PC-3 (cell line): ENCODE measurements at regions of chr3 and their contacts with region 1.

Region 1: GRCh38 chr3:12287727-12288191 is 1.1 kb upstream of the PPARG start:
- DNase-seq: peak; percentile 63
- ATAC-seq: peak; percentile 57
- H3K4me3 ChIP-seq: peak overlapping the region; percentile 74
- H3K27ac ChIP-seq: peak overlapping the region; percentile 78
- H3K4me1 ChIP-seq: peaks cover 18% of the 10 kb centered on the region
- H3K27me3 ChIP-seq: no peaks in the 10 kb centered on the region
- CTCF ChIP-seq: no peak

Region 2: DNA sequence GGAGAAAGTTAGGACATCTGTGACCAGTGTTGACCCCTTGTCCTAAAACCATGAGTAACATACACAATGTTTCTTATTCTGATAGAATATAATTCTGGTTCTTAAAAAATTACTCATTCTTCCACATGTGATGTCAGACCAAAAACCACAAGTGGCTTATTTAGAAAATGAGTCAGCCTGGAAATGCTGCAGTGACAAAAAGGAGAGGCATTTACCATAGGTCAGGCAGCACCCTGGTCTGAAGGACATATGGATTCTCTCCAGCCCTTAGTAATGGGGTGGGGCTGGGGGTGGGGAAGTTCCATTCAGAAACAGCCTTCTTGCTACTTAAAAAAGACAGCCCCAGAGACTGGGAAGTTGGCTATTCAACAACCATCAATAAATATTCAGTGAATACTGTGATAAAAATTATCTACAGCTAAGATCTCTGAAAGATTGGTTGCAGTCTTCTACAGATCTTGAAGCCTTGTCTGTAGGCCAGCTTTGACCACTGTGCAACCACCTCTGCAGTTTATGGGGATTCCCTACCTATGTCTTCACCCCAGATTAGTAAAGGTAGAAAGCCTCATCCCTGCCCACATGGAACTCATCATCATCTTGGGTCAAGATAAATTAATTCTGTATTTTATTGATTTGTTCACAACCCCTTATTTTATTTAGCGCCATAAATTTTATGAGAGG is 94.1 kb before region 1 on chr3:
- CTCF ChIA-PET with region 1: no interaction called
- POLR2A ChIA-PET with region 1: no interaction called
- intact Hi-C with region 1: loop called (anchors 1 kb)
- DNase-seq: peak; percentile 99
- ATAC-seq: peak; percentile 82
- H3K4me3 ChIP-seq: peak overlapping the region; percentile 47
- H3K27ac ChIP-seq: peak overlapping the region; percentile 97
- H3K4me1 ChIP-seq: peaks cover 57% of the 10 kb centered on the region
- H3K27me3 ChIP-seq: no peaks in the 10 kb centered on the region
- CTCF ChIP-seq: no peak

Region 3: GRCh38 chr3:12229903-12230302 is 57.9 kb before region 1 on chr3:
- CTCF ChIA-PET with region 1: no interaction called
- POLR2A ChIA-PET with region 1: no interaction called
- intact Hi-C with region 1: loop called (anchors 2 kb)
- DNase-seq: peak; percentile 94
- ATAC-seq: peak; percentile 92
- H3K4me3 ChIP-seq: no peak overlapping the region
- H3K27ac ChIP-seq: peak overlapping the region; percentile 94
- H3K4me1 ChIP-seq: peaks cover 49% of the 10 kb centered on the region
- H3K27me3 ChIP-seq: no peaks in the 10 kb centered on the region
- CTCF ChIP-seq: no peak

Region 4: GRCh38 chr3:12308517-12308916 is 20.8 kb after region 1 on chr3:
- CTCF ChIA-PET with region 1: no interaction called
- POLR2A ChIA-PET with region 1: no interaction called
- intact Hi-C with region 1: loop called (anchors 2 kb)
- DNase-seq: peak; percentile 98
- ATAC-seq: peak; percentile 54
- H3K4me3 ChIP-seq: peak overlapping the region; percentile 17
- H3K27ac ChIP-seq: peak overlapping the region; percentile 97
- H3K4me1 ChIP-seq: peaks cover 95% of the 10 kb centered on the region
- H3K27me3 ChIP-seq: no peaks in the 10 kb centered on the region
- CTCF ChIP-seq: no peak

Region 5: DNA sequence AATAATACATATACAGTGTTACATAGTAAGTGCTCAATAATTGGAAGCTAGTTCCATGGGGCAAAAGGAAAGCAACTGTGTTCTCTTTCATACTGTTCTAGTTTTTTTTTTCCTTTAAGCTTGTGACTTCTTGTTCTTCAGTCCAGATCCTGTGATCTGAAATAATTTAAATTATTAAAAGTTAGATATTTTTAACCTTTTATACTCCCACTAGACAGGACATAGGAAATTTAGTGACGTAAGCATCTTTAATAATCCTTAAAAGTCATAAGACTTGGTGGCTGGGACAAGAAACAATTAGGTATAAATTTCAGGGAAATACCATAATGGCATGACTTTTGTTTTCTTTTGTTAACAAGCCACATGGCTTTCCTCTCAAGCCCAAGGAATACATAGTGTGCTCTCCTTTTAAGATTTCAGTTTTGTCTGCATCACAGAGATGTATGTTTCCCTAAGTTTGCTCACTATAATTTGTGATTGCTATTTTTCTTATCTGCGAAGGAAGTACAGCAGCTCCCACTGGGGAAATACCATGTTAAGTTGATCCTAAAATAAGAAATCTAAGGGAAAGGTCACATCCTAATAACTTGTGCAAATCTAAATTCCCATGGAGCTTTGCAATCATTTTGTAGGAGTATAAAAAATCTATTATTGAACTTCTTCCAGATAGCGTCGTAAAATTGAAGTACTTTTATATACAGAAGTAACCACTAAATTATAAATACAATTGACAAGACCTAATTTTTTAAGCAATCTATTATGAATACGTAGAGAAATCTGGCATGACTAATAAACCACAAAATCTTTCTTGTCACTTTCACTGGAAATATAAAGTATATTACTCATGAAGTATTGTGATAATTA is 31.2 kb after region 1 on chr3:
- CTCF ChIA-PET with region 1: no interaction called
- POLR2A ChIA-PET with region 1: no interaction called
- intact Hi-C with region 1: no loop called
- DNase-seq: peak; percentile 48
- ATAC-seq: peak; percentile 9; the same call in 1 of the 2 replicates
- H3K4me3 ChIP-seq: no peak overlapping the region
- H3K27ac ChIP-seq: peak overlapping the region; percentile 63
- H3K4me1 ChIP-seq: peaks cover 25% of the 10 kb centered on the region
- H3K27me3 ChIP-seq: no peaks in the 10 kb centered on the region
- CTCF ChIP-seq: no peak

Region 6: DNA sequence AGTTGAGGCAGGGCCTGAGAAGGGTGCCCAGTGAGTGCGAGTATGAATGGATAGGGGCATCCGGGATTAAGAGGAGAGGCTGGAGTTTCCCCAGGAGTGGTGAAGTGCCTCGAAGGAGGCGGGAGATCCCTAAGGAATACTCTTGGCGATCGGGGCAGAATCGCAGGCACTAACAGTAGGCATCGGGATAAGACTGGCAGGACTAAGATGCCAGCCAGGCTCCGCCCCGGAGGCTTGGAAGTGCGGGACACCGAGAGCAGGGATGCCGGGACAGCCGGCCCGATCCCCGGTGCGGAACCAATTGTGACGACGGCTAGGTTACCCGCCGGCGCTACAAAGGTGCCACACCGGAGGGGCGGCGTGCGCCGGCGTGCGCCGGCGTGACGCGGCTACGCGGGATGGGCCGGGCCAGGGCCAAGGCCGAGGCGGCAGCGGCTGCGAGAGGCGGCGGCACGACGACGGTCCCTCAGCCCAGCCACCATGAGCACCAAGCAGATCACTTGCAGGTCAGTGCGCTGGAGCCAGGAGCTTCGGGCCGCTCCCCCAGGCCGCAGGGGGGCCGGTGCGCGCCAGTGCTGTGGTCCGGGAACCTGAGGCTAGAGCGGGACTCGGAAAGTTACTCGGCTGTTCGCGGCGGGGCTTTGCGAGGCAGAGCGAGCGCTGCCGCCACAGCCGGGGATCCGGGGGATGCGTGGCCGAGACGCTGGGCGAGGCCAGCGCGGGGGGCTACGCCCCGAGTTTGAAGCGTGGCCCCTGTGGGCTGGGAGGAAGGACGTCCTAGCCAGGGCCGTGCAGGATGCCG is 269.1 kb after region 1 on chr3 and contains the start of gene MKRN2:
- CTCF ChIA-PET with region 1: no interaction called
- POLR2A ChIA-PET with region 1: interaction called, 22 read pairs
- intact Hi-C with region 1: no loop called
- DNase-seq: peak; percentile 95
- ATAC-seq: peak; percentile 91
- H3K4me3 ChIP-seq: peak within 1 kb of the TSS; percentile 78
- H3K27ac ChIP-seq: peak within 1 kb of the TSS; percentile 66
- H3K4me1 ChIP-seq: peaks cover 16% of the 10 kb centered on the region
- H3K27me3 ChIP-seq: no peaks in the 10 kb centered on the region
- CTCF ChIP-seq: no peak
- total RNA-seq, gene MKRN2: 41.6 and 45.8 TPM in 2 replicates